ENCODE measurements at regions of chr17 and their contacts with region 1.

Region 1: GRCh38 chr17:44218344-44219107 is 949 bp downstream of the UBTF start:
- DNase-seq: peak; percentile 92
- H3K4me3 Mint-ChIP-seq: peak overlapping the region; percentile 76
- H3K27ac Mint-ChIP-seq: peak overlapping the region; percentile 87
- H3K4me1 Mint-ChIP-seq: peaks cover 26% of the 10 kb centered on the region
- H3K27me3 Mint-ChIP-seq: no peaks in the 10 kb centered on the region
- CTCF ChIP-seq: peak; percentile 67

Region 2: DNA sequence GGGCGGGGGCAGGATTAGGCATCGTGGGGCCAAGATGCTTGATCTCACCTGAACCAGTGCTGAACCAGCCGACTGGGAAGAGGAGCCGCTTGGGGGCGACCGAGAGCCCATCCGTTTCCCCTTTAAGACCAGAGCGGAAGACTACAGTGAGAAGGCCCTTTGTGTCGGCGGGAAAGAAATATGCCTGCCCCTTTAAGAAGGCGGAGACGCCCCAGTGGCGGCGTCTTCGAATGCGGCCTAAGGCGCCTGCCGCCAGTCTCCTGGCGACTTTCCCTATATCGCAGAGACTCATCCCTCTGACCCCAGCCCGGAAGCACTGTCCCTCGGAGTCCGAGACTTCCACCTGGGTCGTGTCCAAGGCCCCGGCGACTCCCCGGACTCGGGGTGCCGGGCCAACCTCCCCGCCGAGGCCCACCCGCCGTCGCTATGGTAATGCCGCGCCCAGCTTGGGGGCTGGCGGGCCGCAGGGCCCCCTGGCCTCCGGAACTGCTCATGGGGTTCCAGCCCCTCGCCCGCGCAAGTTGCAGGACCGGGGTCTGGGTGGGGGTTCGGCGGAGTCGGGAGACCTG is 76.7 kb before region 1 on chr17 and contains the start of gene HROB:
- CTCF ChIA-PET with region 1: no interaction called
- POLR2A ChIA-PET with region 1: interaction called, 17 read pairs
- intact Hi-C with region 1: no loop called
- DNase-seq: peak; percentile 98
- H3K4me3 Mint-ChIP-seq: peak within 1 kb of the TSS; percentile 78
- H3K27ac Mint-ChIP-seq: peak within 1 kb of the TSS; percentile 93
- H3K4me1 Mint-ChIP-seq: peaks cover 26% of the 10 kb centered on the region
- H3K27me3 Mint-ChIP-seq: no peaks in the 10 kb centered on the region
- CTCF ChIP-seq: peak; percentile 84
- total RNA-seq, gene HROB: 5.4 and 6.7 TPM in 2 replicates

Region 3: DNA sequence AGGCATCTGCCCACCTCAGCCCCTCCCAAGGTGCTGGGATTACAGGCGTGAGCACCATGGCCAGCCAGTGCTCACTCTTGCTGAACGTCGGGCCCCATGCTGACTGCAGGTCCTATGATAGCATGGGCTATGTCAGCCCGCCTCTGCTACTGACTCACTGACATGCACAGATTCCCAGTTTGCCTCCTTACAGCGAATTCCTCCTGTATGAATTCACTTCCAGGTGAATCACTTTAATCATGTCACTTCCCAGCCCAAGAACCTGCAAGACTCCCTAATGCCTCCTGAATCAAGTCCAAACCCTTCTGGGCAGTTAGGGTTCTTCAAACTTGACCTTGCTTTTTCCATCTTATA is 17.0 kb after region 1 on chr17:
- CTCF ChIA-PET with region 1: no interaction called
- POLR2A ChIA-PET with region 1: interaction called, 10 read pairs
- intact Hi-C with region 1: no loop called
- DNase-seq: peak; percentile 86
- H3K4me3 Mint-ChIP-seq: no peak overlapping the region
- H3K27ac Mint-ChIP-seq: peak overlapping the region; percentile 53
- H3K4me1 Mint-ChIP-seq: peaks cover 14% of the 10 kb centered on the region
- H3K27me3 Mint-ChIP-seq: no peaks in the 10 kb centered on the region
- CTCF ChIP-seq: no peak

Region 4: GRCh38 chr17:44314869-44315661 is 96.5 kb after region 1 on chr17:
- CTCF ChIA-PET with region 1: interaction called, 4 read pairs
- POLR2A ChIA-PET with region 1: interaction called, 15 read pairs
- intact Hi-C with region 1: no loop called
- DNase-seq: no peak
- H3K4me3 Mint-ChIP-seq: peak overlapping the region; percentile 64
- H3K27ac Mint-ChIP-seq: no peak overlapping the region
- H3K4me1 Mint-ChIP-seq: peaks cover 9% of the 10 kb centered on the region
- H3K27me3 Mint-ChIP-seq: peaks cover 12% of the 10 kb centered on the region
- CTCF ChIP-seq: no peak

Region 5: DNA sequence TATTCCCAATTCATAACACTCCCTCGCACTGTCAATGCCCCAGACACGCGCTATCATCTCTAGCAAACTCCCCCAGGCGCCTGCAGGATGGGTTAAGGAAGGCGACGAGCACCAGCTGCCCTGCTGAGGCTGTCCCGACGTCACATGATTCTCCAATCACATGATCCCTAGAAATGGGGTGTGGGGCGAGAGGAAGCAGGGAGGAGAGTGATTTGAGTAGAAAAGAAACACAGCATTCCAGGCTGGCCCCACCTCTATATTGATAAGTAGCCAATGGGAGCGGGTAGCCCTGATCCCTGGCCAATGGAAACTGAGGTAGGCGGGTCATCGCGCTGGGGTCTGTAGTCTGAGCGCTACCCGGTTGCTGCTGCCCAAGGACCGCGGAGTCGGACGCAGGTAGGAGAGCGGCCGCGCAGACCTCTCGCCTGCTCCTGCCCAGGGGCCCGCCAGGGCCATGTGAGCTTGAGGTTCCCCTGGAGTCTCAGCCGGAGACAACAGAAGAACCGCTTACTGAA is 126.5 kb after region 1 on chr17 and contains the start of gene GRN:
- CTCF ChIA-PET with region 1: interaction called, 3 read pairs
- POLR2A ChIA-PET with region 1: interaction called, 40 read pairs
- intact Hi-C with region 1: no loop called
- DNase-seq: peak; percentile 99
- H3K4me3 Mint-ChIP-seq: peak within 1 kb of the TSS; percentile 82
- H3K27ac Mint-ChIP-seq: peak within 1 kb of the TSS; percentile 94
- H3K4me1 Mint-ChIP-seq: peaks cover 12% of the 10 kb centered on the region
- H3K27me3 Mint-ChIP-seq: no peaks in the 10 kb centered on the region
- CTCF ChIP-seq: no peak
- total RNA-seq, gene GRN: 143 and 144 TPM in 2 replicates

Measured in MCF 10A (cell line).